Panc1 (cell line): ENCODE measurements at regions of chr10 and their contacts with region 1.

Region 1: DNA sequence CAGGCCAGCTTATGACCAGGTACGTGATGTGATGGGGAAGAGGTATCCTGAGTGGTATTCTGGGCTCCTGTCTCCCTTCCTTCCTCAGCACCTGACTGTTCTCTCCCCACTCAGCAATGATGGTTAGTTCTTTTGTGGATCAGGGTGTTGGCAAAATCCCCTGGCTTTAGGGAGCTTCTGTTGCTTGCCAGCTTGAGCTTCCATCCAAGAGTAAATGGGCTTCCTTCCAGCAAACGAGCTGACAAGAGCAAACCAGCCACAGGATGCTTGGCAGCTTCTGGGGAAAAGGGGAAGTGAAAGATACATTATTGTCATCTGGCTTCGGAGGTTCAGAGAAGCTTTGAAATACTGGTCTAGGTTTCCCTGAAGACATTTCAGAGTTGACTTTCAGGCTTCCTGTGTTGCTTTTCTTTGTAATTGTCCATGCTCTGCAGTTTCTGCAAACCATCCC is 5.2 kb downstream of the DUSP5 start:
- DNase-seq: no peak
- ATAC-seq: no peak
- H3K4me3 ChIP-seq: 0 out of 4 replicates have a peak overlapping the region, but pooled peaks of 1 of the 2 experiments have one; percentile 7
- H3K27ac ChIP-seq: peak overlapping the region; percentile 94
- H3K4me1 ChIP-seq: peaks cover 51% of the 10 kb centered on the region
- H3K27me3 ChIP-seq: no peaks in the 10 kb centered on the region
- CTCF ChIP-seq: no peak

Region 2: GRCh38 chr10:110311357-110311949 is 191.4 kb before region 1 on chr10:
- CTCF ChIA-PET with region 1: no interaction called
- POLR2A ChIA-PET with region 1: no interaction called
- in situ Hi-C with region 1: no loop called
- intact Hi-C with region 1: loop called (anchors 1 kb)
- DNase-seq: peak; percentile 65
- ATAC-seq: peak; percentile 86
- H3K4me3 ChIP-seq: no peak overlapping the region
- H3K27ac ChIP-seq: peak overlapping the region; percentile 45; the same call in 1 of the 2 replicates
- H3K4me1 ChIP-seq: no peaks in the 10 kb centered on the region; the same call in 1 of the 2 replicates
- H3K27me3 ChIP-seq: no peaks in the 10 kb centered on the region
- CTCF ChIP-seq: peak; percentile 83

Region 3: GRCh38 chr10:110354322-110354766 is 148.5 kb before region 1 on chr10:
- CTCF ChIA-PET with region 1: interaction called, 11 read pairs
- POLR2A ChIA-PET with region 1: no interaction called
- in situ Hi-C with region 1: no loop called
- intact Hi-C with region 1: loop called (anchors 5 kb)
- DNase-seq: peak; percentile 82
- ATAC-seq: peak; percentile 80
- H3K4me3 ChIP-seq: 0 out of 4 replicates have a peak overlapping the region, but pooled peaks of 1 of the 2 experiments have one; percentile 12
- H3K27ac ChIP-seq: peak overlapping the region; percentile 42; the same call in 1 of the 2 replicates
- H3K4me1 ChIP-seq: peaks cover 26% of the 10 kb centered on the region
- H3K27me3 ChIP-seq: no peaks in the 10 kb centered on the region
- CTCF ChIP-seq: peak; percentile 94

Region 4: GRCh38 chr10:110825508-110825907 is 322.6 kb after region 1 on chr10:
- CTCF ChIA-PET with region 1: no interaction called
- POLR2A ChIA-PET with region 1: interaction called, 10 read pairs
- in situ Hi-C with region 1: no loop called
- intact Hi-C with region 1: no loop called
- DNase-seq: no peak
- ATAC-seq: no peak
- H3K4me3 ChIP-seq: no peak overlapping the region
- H3K27ac ChIP-seq: no peak overlapping the region
- H3K4me1 ChIP-seq: no peaks in the 10 kb centered on the region
- H3K27me3 ChIP-seq: peaks cover 3% of the 10 kb centered on the region
- CTCF ChIP-seq: no peak